ENCODE measurements at regions of chr16 and their contacts with region 1.

Region 1: DNA sequence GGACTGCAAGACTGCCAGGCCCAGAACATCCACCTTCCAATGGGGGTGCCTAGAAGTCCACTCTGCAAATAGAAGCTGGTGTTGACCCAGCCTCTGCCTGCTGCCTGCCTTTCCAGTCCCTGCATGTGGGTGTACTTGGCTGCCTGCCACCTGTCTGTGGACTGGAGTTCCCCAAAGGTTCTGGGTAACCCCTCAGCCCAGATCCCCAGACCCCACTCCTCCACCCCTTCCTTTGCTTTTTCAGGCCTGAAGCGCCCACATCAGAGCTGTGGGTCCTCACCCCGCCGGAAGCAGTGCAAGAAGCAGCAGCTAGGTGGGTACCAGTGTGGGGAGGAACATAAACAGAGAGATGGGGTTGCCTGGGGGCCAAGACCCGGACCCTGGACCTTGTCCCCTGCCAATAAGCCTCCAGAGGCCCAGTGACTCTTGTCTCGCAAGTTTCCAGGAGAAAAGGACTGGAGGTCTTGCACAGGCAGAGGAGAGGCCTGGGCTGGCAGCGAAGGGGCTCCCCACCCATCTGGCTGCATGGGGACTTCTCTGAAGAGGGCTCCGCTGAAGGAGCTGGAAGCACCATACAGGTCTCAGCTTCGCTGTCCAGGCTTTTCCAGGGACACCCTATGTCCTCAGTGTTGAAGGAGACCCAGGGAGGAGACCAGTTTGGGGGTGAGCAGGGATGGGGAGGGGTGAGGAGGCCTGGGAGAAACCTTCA is 34.3 kb downstream of the NLRC5 start:
- DNase-seq: peak; percentile 42
- H3K4me3 Mint-ChIP-seq: no peak overlapping the region
- H3K27ac Mint-ChIP-seq: peak overlapping the region; percentile 58
- H3K4me1 Mint-ChIP-seq: peaks cover 48% of the 10 kb centered on the region
- H3K27me3 Mint-ChIP-seq: no peaks in the 10 kb centered on the region

Region 2: GRCh38 chr16:56980792-56981724 is 42.6 kb before region 1 on chr16:
- CTCF ChIA-PET with region 1: no interaction called
- POLR2A ChIA-PET with region 1: no interaction called
- DNase-seq: no peak
- H3K4me3 Mint-ChIP-seq: no peak overlapping the region
- H3K27ac Mint-ChIP-seq: no peak overlapping the region
- H3K4me1 Mint-ChIP-seq: peaks cover 49% of the 10 kb centered on the region
- H3K27me3 Mint-ChIP-seq: no peaks in the 10 kb centered on the region

Region 3: GRCh38 chr16:57039148-57039812 is 15.6 kb after region 1 on chr16:
- CTCF ChIA-PET with region 1: interaction called, 3 read pairs
- POLR2A ChIA-PET with region 1: interaction called, 40 read pairs
- DNase-seq: peak; percentile 49
- H3K4me3 Mint-ChIP-seq: no peak overlapping the region
- H3K27ac Mint-ChIP-seq: peak overlapping the region; percentile 94
- H3K4me1 Mint-ChIP-seq: peaks cover 84% of the 10 kb centered on the region
- H3K27me3 Mint-ChIP-seq: no peaks in the 10 kb centered on the region

Measured in activated CD4-positive, alpha-beta memory T cell treated with anti-CD3 and anti-CD28 coated beads, Interleukin-2, amount 10 ng/mL, durations not matched to agents 7 days and 5 days (primary cell).